MCF 10A (cell line): ENCODE measurements at regions of chr1 and their contacts with region 1.

Region 1: DNA sequence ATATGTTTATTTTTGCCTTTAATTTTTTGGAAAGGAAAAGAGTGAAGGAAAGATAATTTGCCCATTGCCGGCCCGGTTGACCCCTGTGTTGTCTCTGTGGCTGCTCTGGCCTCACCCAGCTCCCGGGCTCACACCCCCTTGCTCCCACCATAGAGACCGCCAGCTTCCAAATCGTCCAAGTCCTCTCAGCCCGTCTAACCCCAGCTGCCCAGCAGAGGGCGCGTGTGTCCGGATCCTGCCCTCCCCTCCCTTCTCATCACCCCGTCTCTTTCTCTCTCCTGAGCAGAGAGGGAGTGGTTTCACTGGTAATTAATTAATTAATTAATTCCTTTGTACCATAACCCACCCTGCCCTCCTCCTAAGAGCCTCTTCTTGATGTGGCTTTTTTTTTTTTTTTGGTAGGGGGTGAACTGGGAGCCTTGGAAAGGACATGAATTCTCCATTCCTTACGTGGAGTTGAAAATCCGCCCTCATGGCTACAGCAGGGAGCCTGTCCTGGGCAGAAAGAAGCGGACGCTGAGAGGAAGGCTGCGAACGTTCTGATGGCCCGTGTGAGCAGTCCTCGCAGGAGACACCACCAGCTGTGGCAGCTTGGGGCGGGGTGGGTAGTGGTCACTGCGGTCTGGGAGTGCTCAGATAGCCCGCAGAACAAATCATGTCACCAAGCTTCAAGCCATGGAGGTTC is 45.9 kb downstream of the KIAA0040 start:
- DNase-seq: peak; percentile 74
- H3K4me3 Mint-ChIP-seq: no peak overlapping the region
- H3K27ac Mint-ChIP-seq: no peak overlapping the region
- H3K4me1 Mint-ChIP-seq: peaks cover 12% of the 10 kb centered on the region
- H3K27me3 Mint-ChIP-seq: peaks cover 15% of the 10 kb centered on the region
- CTCF ChIP-seq: peak; percentile 88

Region 2: DNA sequence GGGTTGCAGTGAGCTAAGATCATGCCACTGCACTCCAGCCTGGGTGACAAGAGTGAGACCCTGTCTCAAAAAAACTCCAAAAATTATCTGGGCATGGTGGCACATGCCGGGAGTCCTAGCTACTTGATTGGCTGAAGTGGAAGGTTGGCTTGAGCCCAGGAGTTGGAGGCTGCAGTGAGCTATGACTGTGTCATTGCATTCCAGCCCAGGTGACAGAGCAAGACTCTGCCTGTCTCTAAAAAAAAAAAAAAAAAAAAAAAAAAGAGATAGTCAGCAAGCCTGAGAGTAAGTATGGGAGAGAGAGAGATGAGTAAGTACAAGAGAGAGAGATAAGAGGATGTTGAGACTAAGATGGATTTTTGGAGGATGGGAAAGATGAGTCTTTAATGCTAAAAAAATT is 327.7 kb before region 1 on chr1:
- CTCF ChIA-PET with region 1: no interaction called
- POLR2A ChIA-PET with region 1: no interaction called
- intact Hi-C with region 1: no loop called
- DNase-seq: peak; percentile 63
- H3K4me3 Mint-ChIP-seq: no peak overlapping the region
- H3K27ac Mint-ChIP-seq: no peak overlapping the region
- H3K4me1 Mint-ChIP-seq: peaks cover 32% of the 10 kb centered on the region
- H3K27me3 Mint-ChIP-seq: no peaks in the 10 kb centered on the region
- CTCF ChIP-seq: no peak

Region 3: DNA sequence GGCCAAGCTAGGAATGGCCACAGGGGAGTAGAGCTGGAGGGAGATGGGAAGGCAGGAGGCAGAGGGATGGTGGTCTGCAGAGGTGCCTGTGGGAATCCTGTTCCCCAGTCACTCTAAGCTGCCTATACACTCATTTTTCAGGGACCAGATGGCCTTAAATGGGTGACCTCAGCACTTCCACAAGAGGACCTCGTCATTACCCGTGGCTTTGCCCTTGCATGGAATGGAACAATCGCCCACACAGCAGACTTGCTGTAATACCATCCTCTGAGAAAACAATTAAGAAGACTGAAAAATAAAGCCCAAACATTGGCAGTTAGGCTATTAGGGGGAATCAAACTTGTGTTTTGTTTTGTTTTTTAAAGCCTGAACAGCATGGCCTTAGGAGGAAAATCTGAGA is 91.9 kb before region 1 on chr1:
- CTCF ChIA-PET with region 1: interaction called, 11 read pairs
- POLR2A ChIA-PET with region 1: no interaction called
- intact Hi-C with region 1: no loop called
- DNase-seq: no peak
- H3K4me3 Mint-ChIP-seq: no peak overlapping the region
- H3K27ac Mint-ChIP-seq: no peak overlapping the region
- H3K4me1 Mint-ChIP-seq: no peaks in the 10 kb centered on the region
- H3K27me3 Mint-ChIP-seq: peaks cover 24% of the 10 kb centered on the region
- CTCF ChIP-seq: no peak

Region 4: GRCh38 chr1:175124861-175125260 is 21.8 kb before region 1 on chr1:
- CTCF ChIA-PET with region 1: interaction called, 51 read pairs
- POLR2A ChIA-PET with region 1: no interaction called
- intact Hi-C with region 1: no loop called
- DNase-seq: peak; percentile 36
- H3K4me3 Mint-ChIP-seq: no peak overlapping the region
- H3K27ac Mint-ChIP-seq: no peak overlapping the region
- H3K4me1 Mint-ChIP-seq: peaks cover 13% of the 10 kb centered on the region
- H3K27me3 Mint-ChIP-seq: no peaks in the 10 kb centered on the region
- CTCF ChIP-seq: no peak

Region 5: GRCh38 chr1:175179845-175180590 is 33.3 kb after region 1 on chr1:
- CTCF ChIA-PET with region 1: interaction called, 415 read pairs
- POLR2A ChIA-PET with region 1: no interaction called
- intact Hi-C with region 1: no loop called
- DNase-seq: peak; percentile 25
- H3K4me3 Mint-ChIP-seq: no peak overlapping the region
- H3K27ac Mint-ChIP-seq: no peak overlapping the region
- H3K4me1 Mint-ChIP-seq: peaks cover 8% of the 10 kb centered on the region
- H3K27me3 Mint-ChIP-seq: no peaks in the 10 kb centered on the region
- CTCF ChIP-seq: no peak

Region 6: GRCh38 chr1:175192630-175193526 is 46.2 kb after region 1 on chr1 and contains the start of gene KIAA0040:
- CTCF ChIA-PET with region 1: interaction called, 78 read pairs
- POLR2A ChIA-PET with region 1: interaction called, 3 read pairs
- intact Hi-C with region 1: no loop called
- DNase-seq: peak; percentile 87
- H3K4me3 Mint-ChIP-seq: peak within 1 kb of the TSS; percentile 80
- H3K27ac Mint-ChIP-seq: peak within 1 kb of the TSS; percentile 67
- H3K4me1 Mint-ChIP-seq: peaks cover 43% of the 10 kb centered on the region
- H3K27me3 Mint-ChIP-seq: no peaks in the 10 kb centered on the region
- CTCF ChIP-seq: no peak
- total RNA-seq, gene KIAA0040: 26.7 and 27.7 TPM in 2 replicates

Region 7: DNA sequence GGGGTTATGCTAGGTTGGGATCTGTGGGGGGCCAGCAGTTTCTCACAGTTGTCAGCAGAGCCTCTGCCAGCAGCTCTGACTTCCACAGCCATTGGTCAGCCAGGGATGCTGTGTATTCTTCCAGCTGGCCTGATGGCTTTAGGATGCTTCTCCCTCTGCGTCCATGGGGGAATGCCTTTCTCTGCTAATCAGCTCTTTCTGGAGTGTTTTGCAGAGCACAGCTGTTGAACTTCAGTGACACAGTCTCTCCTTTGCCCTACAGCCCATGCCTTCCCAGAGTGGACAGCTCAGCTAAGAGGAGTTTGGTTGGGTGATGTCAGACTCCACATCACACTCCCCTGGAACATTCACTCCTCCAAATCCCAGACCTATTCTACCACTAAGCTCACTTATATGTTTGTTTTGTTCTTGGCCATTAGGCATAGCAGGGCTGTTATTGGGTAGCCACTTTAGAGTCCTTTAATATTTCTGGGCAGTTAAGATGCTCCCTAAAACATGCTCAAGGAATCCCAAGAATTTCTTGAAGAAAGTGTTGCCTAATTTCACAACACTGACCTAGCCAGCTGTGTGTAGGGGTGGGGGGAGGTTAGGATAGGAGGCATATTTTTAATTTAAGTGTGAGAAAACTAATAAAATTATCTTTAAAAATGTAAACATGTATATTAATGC is 121.2 kb after region 1 on chr1:
- CTCF ChIA-PET with region 1: interaction called, 13 read pairs
- POLR2A ChIA-PET with region 1: interaction called, 3 read pairs
- intact Hi-C with region 1: no loop called
- DNase-seq: no peak
- H3K4me3 Mint-ChIP-seq: no peak overlapping the region
- H3K27ac Mint-ChIP-seq: no peak overlapping the region
- H3K4me1 Mint-ChIP-seq: peaks cover 2% of the 10 kb centered on the region
- H3K27me3 Mint-ChIP-seq: no peaks in the 10 kb centered on the region
- CTCF ChIP-seq: no peak

Region 8: DNA sequence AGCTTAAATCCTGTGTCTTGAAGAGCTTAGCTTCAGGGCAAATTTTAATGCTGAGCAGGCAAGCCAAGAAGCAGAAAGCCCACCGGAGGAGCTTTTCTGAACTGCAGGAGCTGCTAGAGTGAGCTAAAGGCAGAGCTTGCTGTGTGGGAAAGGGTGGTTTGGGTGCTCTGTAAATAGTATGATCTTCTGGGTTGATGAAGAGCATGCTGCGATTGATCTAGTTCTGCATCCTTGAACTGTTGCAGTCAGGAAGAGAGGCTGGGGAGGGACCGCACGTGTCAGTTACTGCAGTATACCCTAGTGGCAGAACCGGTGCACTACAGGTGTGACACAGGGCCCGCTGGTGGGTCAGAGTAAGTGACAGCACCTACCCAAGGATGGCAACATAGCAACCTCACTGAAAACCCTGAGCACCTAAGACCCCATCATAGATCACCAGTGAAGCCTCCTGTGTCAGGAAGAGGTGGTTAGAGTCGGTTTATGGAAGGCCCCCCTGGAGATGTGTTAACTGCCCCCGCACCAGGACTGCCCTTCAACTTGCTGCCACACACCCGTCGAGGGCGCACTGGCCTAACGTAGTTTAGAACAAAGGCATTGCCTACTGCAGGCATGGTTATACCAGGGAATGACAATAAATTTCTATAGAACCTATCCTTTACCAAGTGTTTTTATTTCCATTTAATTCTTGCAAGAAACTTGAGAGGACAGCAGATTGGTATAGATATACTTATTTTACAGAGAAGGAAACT is 191.9 kb after region 1 on chr1:
- CTCF ChIA-PET with region 1: interaction called, 25 read pairs
- POLR2A ChIA-PET with region 1: interaction called, 3 read pairs
- intact Hi-C with region 1: no loop called
- DNase-seq: peak; percentile 48
- H3K4me3 Mint-ChIP-seq: no peak overlapping the region
- H3K27ac Mint-ChIP-seq: no peak overlapping the region
- H3K4me1 Mint-ChIP-seq: no peaks in the 10 kb centered on the region
- H3K27me3 Mint-ChIP-seq: peaks cover 52% of the 10 kb centered on the region
- CTCF ChIP-seq: peak; percentile 56